Heart right ventricle (tissue), 16 donors: ENCODE measurements at regions of chr2 and their contacts with region 1.

Region 1: GRCh38 chr2:96265840-96266679 is at the starts of genes CIAO1 and TMEM127:
- DNase-seq: peak; percentile 98 to 99
- ATAC-seq: peak; percentile 96 to 98 (median 98)
- H3K4me3 ChIP-seq: peak within 1 kb of the TSS; percentile 91 to 99 (median 96)
- H3K27ac ChIP-seq: peak within 1 kb of the TSS; percentile 84 to 99 (median 96)
- H3K4me1 ChIP-seq: peaks cover 27 to 57% (median 51%) of the 10 kb centered on the region in 9 donors
- H3K27me3 ChIP-seq: no peaks in the 10 kb centered on the region
- CTCF ChIP-seq: peak in 5 of 9 donors; percentile 22 to 38 (median 34)
- total RNA-seq, gene CIAO1: 59.2 to 72.1 (median 64.9) TPM
- total RNA-seq, gene TMEM127: 72.2 to 113 (median 95.1) TPM

Region 2: GRCh38 chr2:96145036-96145847 is 120.8 kb before region 1 on chr2 and contains the start of gene DUSP2:
- intact Hi-C with region 1: loop called in 3 of 10 experiments (anchors 5 to 10 kb)
- DNase-seq: peak; percentile 64 to 75
- ATAC-seq: peak; percentile 82 to 88 (median 86)
- H3K4me3 ChIP-seq: peak within 1 kb of the TSS; percentile 32 to 68 (median 56)
- H3K27ac ChIP-seq: peak within 1 kb of the TSS in 9 of 10 donors; percentile 11 to 89 (median 52)
- H3K4me1 ChIP-seq: peaks cover 0 to 62% (median 39%) of the 10 kb centered on the region in 9 donors
- H3K27me3 ChIP-seq: peaks cover 0 to 5% (median 0%) of the 10 kb centered on the region in 7 donors
- CTCF ChIP-seq: peak in 2 of 9 donors; percentile 4 to 23
- total RNA-seq, gene DUSP2: 0.61 to 6.8 (median 2.5) TPM

Region 3: DNA sequence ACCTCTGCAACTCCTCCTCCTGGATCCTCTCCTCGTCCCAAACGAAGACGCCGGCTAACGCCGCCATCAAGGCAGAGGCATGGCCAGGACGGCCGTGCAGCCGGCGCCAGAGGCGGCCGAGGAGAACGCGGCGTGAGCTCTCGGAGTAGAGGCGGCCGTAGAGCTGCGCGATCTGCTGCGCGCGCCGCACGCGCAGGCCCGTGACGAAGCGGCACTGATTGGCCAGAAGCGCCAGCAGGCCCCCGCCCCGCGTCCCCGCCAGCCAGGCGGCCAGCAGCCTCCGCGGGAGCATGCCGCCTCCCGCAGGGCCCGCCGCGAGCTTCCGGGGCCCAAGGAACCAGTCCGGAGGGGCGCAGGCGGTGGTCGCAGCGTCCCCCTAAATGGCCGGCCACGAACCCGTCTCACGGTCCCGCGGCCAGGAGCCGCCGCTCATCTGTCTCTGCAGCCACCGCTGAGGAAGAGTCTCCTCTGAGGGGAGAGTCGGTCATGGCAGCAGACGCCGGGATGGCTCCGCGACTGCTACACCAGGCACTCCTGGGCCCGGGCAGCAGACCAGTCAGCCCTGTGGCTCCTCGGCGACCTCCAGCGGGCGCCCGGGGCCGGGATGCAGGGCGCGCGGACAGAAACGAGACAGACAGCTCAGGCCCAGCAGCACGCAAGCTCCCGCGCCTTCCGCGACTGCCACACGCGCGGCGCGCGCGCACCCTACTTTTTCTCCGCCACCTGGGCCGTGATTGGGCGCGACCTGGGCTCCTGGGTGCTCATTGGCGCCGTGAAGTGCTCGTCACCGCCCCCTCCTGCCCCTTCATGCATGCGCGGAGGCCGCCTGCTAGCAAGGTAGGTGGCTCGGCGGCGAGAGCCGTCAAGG is 57.7 kb before region 1 on chr2 and contains the start of gene STARD7:
- intact Hi-C with region 1: loop called in 5 of 10 experiments (anchors 2 to 10 kb)
- DNase-seq: peak; percentile 99
- ATAC-seq: peak; percentile 96 to 97 (median 96)
- H3K4me3 ChIP-seq: peak within 1 kb of the TSS; percentile 63 to 100 (median 95)
- H3K27ac ChIP-seq: peak within 1 kb of the TSS; percentile 91 to 99 (median 97)
- H3K4me1 ChIP-seq: peaks cover 12 to 58% (median 54%) of the 10 kb centered on the region in 9 donors
- H3K27me3 ChIP-seq: no peaks in the 10 kb centered on the region
- CTCF ChIP-seq: peak in 7 of 9 donors; percentile 10 to 39 (median 31)
- total RNA-seq, gene STARD7: 138 to 397 (median 191) TPM

Region 4: DNA sequence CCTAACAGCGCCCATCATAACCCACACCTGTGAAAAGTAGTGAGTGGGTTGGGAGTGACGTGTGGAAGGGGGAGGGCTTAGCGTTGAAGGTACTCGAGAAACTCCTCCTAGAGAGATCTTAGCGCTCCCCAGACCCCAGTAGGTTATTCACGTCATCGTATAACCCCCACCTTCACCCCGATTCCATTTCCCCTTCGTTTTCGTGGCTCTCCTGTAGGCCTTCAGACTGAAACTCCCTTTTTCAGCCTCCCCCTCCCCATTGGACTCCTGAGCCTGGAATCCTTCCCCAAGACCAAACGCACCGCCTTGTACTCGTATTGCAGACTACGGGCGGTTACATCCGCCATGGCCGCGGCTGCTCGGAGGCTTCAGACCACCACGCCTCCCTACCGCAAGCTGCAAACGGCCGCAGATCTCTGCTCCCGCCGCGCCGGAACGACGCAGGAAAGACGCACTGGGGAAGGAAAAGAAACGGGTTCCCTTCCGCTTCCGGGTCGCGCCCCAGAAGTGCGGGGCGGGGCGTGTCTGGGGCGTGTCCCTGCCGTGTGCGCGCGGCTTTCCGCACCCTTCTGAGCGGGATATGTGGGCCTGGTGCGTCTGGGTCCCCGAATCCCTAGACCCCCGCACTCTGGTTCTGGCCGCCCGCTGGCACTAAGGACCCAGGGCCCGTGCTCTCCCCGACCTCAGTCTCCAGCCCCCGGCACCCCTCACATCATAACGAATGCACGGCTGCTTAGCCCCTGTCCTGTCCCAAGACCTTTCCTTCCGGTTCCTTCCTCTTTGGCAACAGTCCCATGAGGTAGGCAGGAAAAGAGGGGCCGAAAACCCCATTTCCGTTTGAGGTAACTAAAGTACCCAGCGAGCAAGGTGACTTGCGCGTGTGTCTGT is 39.3 kb after region 1 on chr2 and contains the start of gene SNRNP200:
- intact Hi-C with region 1: loop called in 4 of 10 experiments (anchors 1 to 5 kb)
- DNase-seq: peak; percentile 88 to 89
- ATAC-seq: peak; percentile 97 to 100 (median 99)
- H3K4me3 ChIP-seq: peak within 1 kb of the TSS; percentile 57 to 94 (median 74)
- H3K27ac ChIP-seq: peak within 1 kb of the TSS; percentile 5 to 96 (median 86)
- H3K4me1 ChIP-seq: peaks cover 6 to 40% (median 24%) of the 10 kb centered on the region in 9 donors
- H3K27me3 ChIP-seq: no peaks in the 10 kb centered on the region
- CTCF ChIP-seq: no peak
- total RNA-seq, gene SNRNP200: 56.2 to 70.5 (median 63.6) TPM

Region 5: GRCh38 chr2:96359310-96359709 is 93.2 kb after region 1 on chr2:
- intact Hi-C with region 1: loop called in 1 of 10 experiments (anchors 10 kb)
- DNase-seq: peak in 1 of 2 donors; percentile 30
- ATAC-seq: peak in 2 of 8 donors; percentile 45 to 66
- H3K4me3 ChIP-seq: no peak overlapping the region
- H3K27ac ChIP-seq: no peak overlapping the region
- H3K4me1 ChIP-seq: peaks cover 0 to 14% (median 3%) of the 10 kb centered on the region in 9 donors
- H3K27me3 ChIP-seq: no peaks in the 10 kb centered on the region
- CTCF ChIP-seq: peak in 7 of 9 donors; percentile 20 to 51 (median 39)